ENCODE measurements at regions of chr2 and their contacts with region 1.

Region 1: DNA sequence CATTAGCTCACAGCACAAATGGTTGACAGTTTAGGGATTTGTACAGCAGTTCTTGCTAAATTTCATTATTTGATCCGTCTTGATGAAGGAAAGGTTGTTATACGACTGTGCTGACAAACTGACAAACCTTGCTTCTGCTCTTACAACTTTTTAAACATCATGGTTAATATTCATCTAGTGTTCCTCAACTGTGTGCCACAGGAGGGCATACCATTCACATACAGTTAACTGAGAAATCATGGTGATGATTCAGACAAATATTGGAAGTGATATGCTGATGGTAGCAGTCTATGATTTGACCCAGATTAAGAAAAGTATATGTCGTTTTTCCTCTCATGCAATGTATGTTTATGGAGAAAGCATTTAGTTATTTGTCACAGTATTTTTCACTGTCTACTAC is 129.8 kb upstream of the FSIP2 start:
- DNase-seq: no peak
- ATAC-seq: no peak

Region 2: DNA sequence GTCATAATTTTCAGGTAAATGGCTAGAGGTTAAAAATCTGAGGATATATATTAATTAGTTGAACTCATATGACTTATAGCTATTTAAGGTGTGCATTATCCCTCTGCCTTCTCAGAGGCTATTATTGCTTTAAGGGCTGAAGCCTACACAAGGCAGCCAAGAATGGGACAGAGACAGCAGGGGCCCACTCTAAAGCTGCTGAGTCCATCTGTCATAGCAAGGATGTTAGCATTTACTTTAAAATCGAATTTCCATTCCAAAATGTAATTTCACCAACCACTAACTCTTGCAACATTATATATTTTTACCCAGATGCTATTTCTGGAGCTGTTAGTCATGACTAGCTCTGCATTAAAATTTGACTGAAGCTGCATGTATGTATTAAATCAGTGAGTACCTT is 106.4 kb before region 1 on chr2:
- intact Hi-C with region 1: no loop called
- DNase-seq: no peak
- ATAC-seq: no peak

Region 3: DNA sequence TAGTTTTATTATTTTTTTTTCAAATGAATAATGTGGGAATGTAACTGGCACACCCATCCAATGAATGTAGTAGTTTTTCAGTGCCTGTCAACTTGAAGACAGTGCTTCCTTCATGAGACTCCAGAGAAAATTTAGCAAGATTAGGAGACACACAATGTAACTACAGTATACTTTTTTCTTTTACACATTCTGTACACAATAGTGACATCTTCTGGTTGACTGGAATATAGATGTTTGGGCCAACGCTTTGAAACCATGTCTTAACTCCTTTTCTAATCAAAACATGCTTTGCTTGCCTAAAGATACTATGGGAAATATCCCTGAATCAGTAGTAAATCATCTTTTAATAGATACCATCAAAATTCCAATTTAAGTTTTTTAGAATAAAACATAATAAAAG is 647.7 kb after region 1 on chr2:
- intact Hi-C with region 1: loop called in 1 of 2 experiments (anchors 10 kb)
- DNase-seq: no peak
- ATAC-seq: peak; percentile 50 to 59